H1 (cell line): ENCODE measurements at regions of chr12 and their contacts with region 1.

Region 1: DNA sequence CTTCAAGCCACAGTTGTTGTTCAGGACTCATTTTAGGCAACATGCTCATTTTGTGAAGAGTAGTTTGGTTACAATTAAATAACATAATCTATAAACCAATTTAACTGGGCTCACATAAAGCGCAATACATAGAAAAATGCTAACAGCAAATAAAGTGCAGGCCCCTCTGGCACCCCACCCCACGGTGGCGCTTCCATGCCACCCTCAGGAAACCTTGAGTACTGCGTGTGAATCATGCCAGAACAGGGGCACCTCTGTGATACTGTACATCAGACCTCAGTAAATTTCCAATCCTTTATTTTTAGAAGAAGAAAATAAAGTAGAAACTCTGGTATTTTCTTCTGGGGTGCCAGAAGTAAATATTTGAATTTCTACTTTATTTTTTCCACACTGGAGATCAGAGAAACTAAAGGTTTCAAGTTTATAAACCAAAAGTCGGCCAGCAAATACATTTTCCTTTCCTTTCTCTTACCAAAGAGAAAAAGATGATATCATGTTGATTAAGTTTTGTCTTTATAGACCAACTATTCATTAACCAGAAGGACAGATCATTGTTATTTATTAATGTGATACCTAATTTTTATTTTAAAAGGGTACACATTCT is 316.8 kb downstream of the PAWR start:
- DNase-seq: peak in 1 of 2 experiments; percentile 73
- H3K4me3 ChIP-seq: no peak overlapping the region
- H3K27ac ChIP-seq: no peak overlapping the region
- H3K4me1 ChIP-seq: peaks cover 0 to 7% (median 0%) of the 10 kb centered on the region in 4 experiments; a peak in 1 of 7 replicates
- H3K27me3 ChIP-seq: no peaks in the 10 kb centered on the region
- CTCF ChIP-seq: peak; percentile 76 to 88 (median 85)
- EP300 ChIP-seq: no peak
- POLR2A ChIP-seq: no peak
- RAD21 ChIP-seq: peak; percentile 92 to 93

Region 2: GRCh38 chr12:79274501-79275064 is 99.4 kb before region 1 on chr12:
- CTCF ChIA-PET with region 1: no interaction called
- POLR2A ChIA-PET with region 1: no interaction called
- DNase-seq: peak in 1 of 2 experiments; percentile 45
- H3K4me3 ChIP-seq: no peak overlapping the region
- H3K27ac ChIP-seq: no peak overlapping the region
- H3K4me1 ChIP-seq: peaks cover 0 to 6% (median 2%) of the 10 kb centered on the region in 4 experiments; a peak in 3 of 7 replicates
- H3K27me3 ChIP-seq: no peaks in the 10 kb centered on the region
- CTCF ChIP-seq: no peak
- EP300 ChIP-seq: no peak
- POLR2A ChIP-seq: no peak
- RAD21 ChIP-seq: no peak

Region 3: GRCh38 chr12:79358716-79359300 is 15.2 kb before region 1 on chr12:
- CTCF ChIA-PET with region 1: interaction called, 13 read pairs
- POLR2A ChIA-PET with region 1: interaction called, 3 read pairs
- DNase-seq: no peak
- H3K4me3 ChIP-seq: no peak overlapping the region
- H3K27ac ChIP-seq: no peak overlapping the region
- H3K4me1 ChIP-seq: peaks cover 0 to 4% (median 0%) of the 10 kb centered on the region in 4 experiments; a peak in 1 of 7 replicates
- H3K27me3 ChIP-seq: peaks cover 0 to 1% (median 0%) of the 10 kb centered on the region in 4 experiments; a peak in 1 of 7 replicates
- CTCF ChIP-seq: peak in 2 of 3 experiments; percentile 28; a peak in 3 of 4 replicates
- EP300 ChIP-seq: no peak
- POLR2A ChIP-seq: no peak
- RAD21 ChIP-seq: peak; percentile 19 to 43; a peak in 2 of 4 replicates

Region 4: DNA sequence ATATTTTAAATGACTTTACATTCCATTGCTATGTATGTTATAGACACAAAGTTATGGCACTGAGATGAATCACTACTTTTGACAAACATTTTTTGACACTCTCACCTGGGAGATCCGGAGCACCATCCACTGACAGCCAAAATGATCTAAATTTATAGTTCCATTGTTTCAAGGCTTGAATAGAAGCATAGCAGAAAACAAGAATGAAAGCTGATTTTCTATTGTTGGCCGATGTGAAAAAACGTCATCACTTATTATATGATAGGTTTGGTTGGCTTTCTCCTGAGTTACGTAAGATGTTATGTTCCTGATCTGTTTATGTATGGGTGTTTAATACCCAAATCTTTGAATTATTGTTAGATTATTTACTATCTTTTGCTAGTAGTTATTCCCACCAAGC is 10.6 kb after region 1 on chr12:
- CTCF ChIA-PET with region 1: interaction called, 16 read pairs
- POLR2A ChIA-PET with region 1: interaction called, 3 read pairs
- DNase-seq: no peak
- H3K4me3 ChIP-seq: no peak overlapping the region
- H3K27ac ChIP-seq: no peak overlapping the region
- H3K4me1 ChIP-seq: peaks cover 5 to 15% (median 10%) of the 10 kb centered on the region in 4 experiments; a peak in 5 of 7 replicates
- H3K27me3 ChIP-seq: no peaks in the 10 kb centered on the region
- CTCF ChIP-seq: no peak
- EP300 ChIP-seq: no peak
- POLR2A ChIP-seq: no peak
- RAD21 ChIP-seq: no peak

Region 5: DNA sequence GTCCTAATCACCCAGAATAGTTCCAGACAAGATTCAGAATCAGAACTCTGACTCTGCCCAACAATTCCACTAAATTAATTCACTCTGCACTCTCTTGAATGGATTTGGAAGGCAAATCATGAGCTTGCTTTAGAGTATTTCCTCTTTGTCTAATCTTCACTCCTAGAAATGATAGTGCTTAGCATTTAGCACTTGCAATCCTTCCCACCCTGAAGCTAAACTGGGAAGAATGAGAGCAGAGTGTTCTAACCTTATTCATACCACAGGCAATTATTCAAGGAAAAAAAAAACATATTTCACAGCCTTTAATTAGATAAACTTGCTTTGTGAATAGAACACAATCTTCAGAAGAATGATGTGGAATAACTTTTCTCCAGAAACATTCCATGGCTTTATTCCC is 52.1 kb after region 1 on chr12:
- CTCF ChIA-PET with region 1: no interaction called
- POLR2A ChIA-PET with region 1: no interaction called
- DNase-seq: no peak
- H3K4me3 ChIP-seq: no peak overlapping the region
- H3K27ac ChIP-seq: no peak overlapping the region
- H3K4me1 ChIP-seq: no peaks in the 10 kb centered on the region
- H3K27me3 ChIP-seq: no peaks in the 10 kb centered on the region
- CTCF ChIP-seq: no peak
- EP300 ChIP-seq: no peak
- POLR2A ChIP-seq: no peak
- RAD21 ChIP-seq: no peak